ENCODE measurements at regions of chr4 and their contacts with region 1.

Region 1: DNA sequence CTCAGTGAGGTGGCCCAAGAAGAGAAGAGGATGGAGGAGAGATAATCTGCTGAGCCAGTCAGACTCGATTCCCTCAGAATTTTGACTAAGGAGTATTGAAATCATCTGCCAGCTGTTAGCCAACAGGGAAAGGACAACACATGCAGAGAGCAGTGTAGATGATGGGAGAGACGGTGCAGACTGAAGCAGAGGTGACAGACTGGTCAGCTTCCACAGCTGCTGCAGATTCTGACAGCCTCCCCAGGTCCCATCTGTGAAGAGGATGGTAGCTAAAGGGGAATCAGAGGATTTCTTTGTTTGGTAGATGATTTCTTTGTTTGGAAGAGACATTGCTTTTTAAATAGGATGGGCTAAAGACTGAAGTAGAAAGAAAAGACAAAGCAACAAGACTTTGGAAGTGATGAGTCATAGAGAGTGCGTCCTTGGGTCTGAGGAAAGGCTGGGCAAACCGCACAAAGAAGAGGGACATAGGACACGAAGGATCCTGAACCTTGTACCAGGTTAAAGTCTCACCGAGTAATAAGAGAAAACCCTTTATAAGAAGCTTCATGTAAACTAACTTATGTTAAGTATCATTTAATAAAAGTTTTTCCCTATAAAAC is 27.6 kb downstream of the INTU start:
- DNase-seq: no peak
- ATAC-seq: no peak
- H3K4me3 ChIP-seq: no peak overlapping the region
- H3K27ac ChIP-seq: no peak overlapping the region
- H3K4me1 ChIP-seq: no peaks in the 10 kb centered on the region
- H3K27me3 ChIP-seq: no peaks in the 10 kb centered on the region
- CTCF ChIP-seq: no peak

Region 2: GRCh38 chr4:127642169-127642568 is 18.2 kb before region 1 on chr4:
- intact Hi-C with region 1: loop called in 1 of 2 experiments (anchors 2 kb)
- DNase-seq: no peak
- ATAC-seq: no peak
- H3K4me3 ChIP-seq: no peak overlapping the region
- H3K27ac ChIP-seq: no peak overlapping the region
- H3K4me1 ChIP-seq: no peaks in the 10 kb centered on the region
- H3K27me3 ChIP-seq: no peaks in the 10 kb centered on the region
- CTCF ChIP-seq: no peak

Region 3: GRCh38 chr4:127809173-127809800 is 148.9 kb after region 1 on chr4:
- intact Hi-C with region 1: no loop called
- DNase-seq: no peak
- ATAC-seq: no peak
- H3K4me3 ChIP-seq: no peak overlapping the region
- H3K27ac ChIP-seq: no peak overlapping the region
- H3K4me1 ChIP-seq: no peaks in the 10 kb centered on the region
- H3K27me3 ChIP-seq: no peaks in the 10 kb centered on the region
- CTCF ChIP-seq: no peak

Measured in psoas muscle (tissue), 8 donors.